ENCODE measurements at regions of chrX and their contacts with region 1.

Region 1: GRCh38 chrX:56248492-56248891 is 16.3 kb downstream of the KLF8 start:
- DNase-seq: peak; percentile 40
- ATAC-seq: peak; percentile 95
- H3K4me3 ChIP-seq: no peak overlapping the region
- H3K27ac ChIP-seq: no peak overlapping the region
- H3K4me1 ChIP-seq: peaks cover 3% of the 10 kb centered on the region; the same call in 1 of the 2 replicates
- H3K27me3 ChIP-seq: no peaks in the 10 kb centered on the region
- CTCF ChIP-seq: peak; percentile 70 to 88 (median 75)
- EP300 ChIP-seq: no peak
- POLR2A ChIP-seq: no peak
- RAD21 ChIP-seq: peak; percentile 95

Region 2: DNA sequence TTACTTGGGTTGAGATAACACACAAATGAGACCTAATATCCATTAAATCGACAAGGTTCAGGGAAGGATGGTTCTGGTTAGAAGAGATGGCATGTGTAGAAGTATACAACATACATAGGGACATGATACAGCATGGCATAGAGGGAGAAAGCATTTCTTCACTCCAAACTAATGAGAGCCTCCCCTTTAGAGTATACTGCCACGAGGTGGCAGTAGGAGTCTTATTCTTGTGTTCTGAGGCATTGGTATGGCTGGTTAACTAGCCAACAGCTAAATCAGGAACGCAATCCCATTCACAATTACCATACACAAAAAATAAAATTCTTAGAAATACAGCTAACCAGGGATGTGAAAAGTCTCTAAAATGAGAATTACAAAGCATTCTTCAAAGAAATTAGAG is 1356.9 kb before region 1 on chrX:
- CTCF ChIA-PET with region 1: interaction called, 3 read pairs
- POLR2A ChIA-PET with region 1: no interaction called
- RAD21 ChIA-PET with region 1: no interaction called
- SMC1A ChIA-PET with region 1: no interaction called
- in situ Hi-C with region 1: no loop called
- intact Hi-C with region 1: loop called (anchors 5 kb)
- DNase-seq: no peak
- ATAC-seq: peak; percentile 72
- H3K4me3 ChIP-seq: no peak overlapping the region
- H3K27ac ChIP-seq: no peak overlapping the region
- H3K4me1 ChIP-seq: no peaks in the 10 kb centered on the region
- H3K27me3 ChIP-seq: no peaks in the 10 kb centered on the region
- CTCF ChIP-seq: peak; percentile 49 to 58 (median 51); a peak in 5 of 6 replicates
- EP300 ChIP-seq: no peak
- POLR2A ChIP-seq: no peak
- RAD21 ChIP-seq: peak; percentile 67

Region 3: DNA sequence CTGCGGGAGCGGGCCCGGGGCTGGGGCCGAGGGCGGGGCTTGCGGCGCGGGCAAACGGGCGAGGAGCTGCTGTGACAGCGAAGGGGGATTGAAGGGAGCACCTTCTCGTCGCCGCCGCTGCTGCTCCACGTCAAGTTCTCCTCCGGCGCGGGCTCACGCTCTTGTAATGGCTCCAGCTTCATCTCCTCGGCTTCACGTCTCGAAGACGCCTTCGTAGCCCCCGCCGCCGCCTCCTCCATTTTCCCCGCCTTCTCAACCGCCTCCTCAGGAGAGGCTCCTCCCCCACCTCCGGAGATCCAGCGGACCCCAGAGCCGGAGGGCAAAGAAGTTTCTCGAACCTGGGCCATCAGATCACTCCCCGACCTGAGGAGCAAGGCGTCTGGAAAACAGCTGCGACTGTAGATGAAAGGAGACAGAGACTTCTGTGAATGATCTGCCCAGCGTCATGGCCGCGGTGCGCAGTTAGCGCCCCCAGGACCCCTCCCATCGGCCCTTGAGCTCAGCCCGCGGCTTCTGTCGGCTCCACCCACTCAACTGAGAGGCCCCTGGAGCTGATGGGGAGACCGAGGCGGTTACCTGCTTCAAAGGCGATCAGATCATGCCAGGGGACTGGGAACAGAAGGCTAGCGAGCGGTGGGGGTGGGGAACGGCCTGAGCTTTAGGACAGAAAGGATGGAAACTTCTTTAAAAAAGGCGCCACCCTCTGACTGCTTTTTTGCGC is 759.7 kb before region 1 on chrX:
- CTCF ChIA-PET with region 1: interaction called, 3 read pairs
- POLR2A ChIA-PET with region 1: no interaction called
- RAD21 ChIA-PET with region 1: interaction called, 3 read pairs
- SMC1A ChIA-PET with region 1: no interaction called
- in situ Hi-C with region 1: loop called (anchors 25 kb)
- intact Hi-C with region 1: no loop called
- DNase-seq: peak; percentile 8
- ATAC-seq: peak; percentile 79
- H3K4me3 ChIP-seq: peak overlapping the region; percentile 72
- H3K27ac ChIP-seq: peak overlapping the region; percentile 57
- H3K4me1 ChIP-seq: no peaks in the 10 kb centered on the region
- H3K27me3 ChIP-seq: no peaks in the 10 kb centered on the region
- CTCF ChIP-seq: peak in 1 of 3 experiments; percentile 13; a peak in 1 of 6 replicates
- EP300 ChIP-seq: 0 out of 4 replicates have a peak, but pooled peaks of 1 of the 2 experiments have one; percentile 14
- POLR2A ChIP-seq: peak; percentile 60; the same call in 1 of the 2 replicates
- RAD21 ChIP-seq: no peak

Region 4: DNA sequence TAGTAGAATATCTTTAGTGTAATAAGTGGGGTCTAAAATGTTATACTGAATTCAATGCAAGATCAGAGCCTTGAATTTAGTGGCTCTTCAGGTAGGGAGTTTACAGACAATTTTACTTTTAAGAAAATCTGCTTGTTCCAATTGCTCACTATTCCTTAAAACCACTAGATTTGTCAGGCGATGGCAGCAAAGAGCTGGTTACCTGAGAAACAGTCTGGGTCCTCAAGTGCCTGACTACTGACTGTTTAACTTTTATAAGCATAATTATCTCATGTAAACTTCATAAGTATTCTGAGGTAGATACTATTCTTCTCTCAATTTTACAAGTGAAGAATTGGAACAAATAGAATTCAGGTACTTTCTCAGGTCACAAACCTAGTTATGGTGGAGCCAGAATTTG is 446.7 kb before region 1 on chrX:
- CTCF ChIA-PET with region 1: interaction called, 11 read pairs
- POLR2A ChIA-PET with region 1: no interaction called
- RAD21 ChIA-PET with region 1: interaction called, 13 read pairs
- SMC1A ChIA-PET with region 1: interaction called, 20 read pairs
- in situ Hi-C with region 1: no loop called
- intact Hi-C with region 1: loop called (anchors 5 kb)
- DNase-seq: no peak
- ATAC-seq: peak; percentile 36; the same call in 1 of the 3 replicates
- H3K4me3 ChIP-seq: no peak overlapping the region
- H3K27ac ChIP-seq: no peak overlapping the region
- H3K4me1 ChIP-seq: no peaks in the 10 kb centered on the region
- H3K27me3 ChIP-seq: no peaks in the 10 kb centered on the region
- CTCF ChIP-seq: peak in 1 of 3 experiments; percentile 32; a peak in 1 of 6 replicates
- EP300 ChIP-seq: no peak
- POLR2A ChIP-seq: no peak
- RAD21 ChIP-seq: peak; percentile 32; the same call in 1 of the 2 replicates

Region 5: DNA sequence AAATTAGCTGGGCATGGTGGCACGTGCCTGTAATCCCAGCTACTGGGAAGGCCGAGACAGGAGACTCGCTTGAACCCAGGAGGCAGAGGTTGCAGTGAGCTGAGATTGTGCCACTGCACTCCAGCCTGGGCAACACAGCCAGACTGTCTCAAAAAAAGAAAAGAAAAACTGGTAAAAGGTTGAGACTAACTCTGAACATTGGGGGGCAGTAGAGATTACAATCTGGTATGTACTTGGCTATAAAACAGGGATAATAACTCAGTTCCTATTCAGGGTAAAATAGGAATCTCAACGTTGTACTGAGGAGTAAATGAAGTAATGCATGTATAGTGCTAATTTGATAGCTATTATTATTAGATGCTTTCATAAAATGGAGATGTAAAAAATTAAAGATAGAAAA is 28.8 kb before region 1 on chrX:
- CTCF ChIA-PET with region 1: interaction called, 11 read pairs
- POLR2A ChIA-PET with region 1: no interaction called
- RAD21 ChIA-PET with region 1: interaction called, 3 read pairs
- SMC1A ChIA-PET with region 1: interaction called, 9 read pairs
- in situ Hi-C with region 1: no loop called
- intact Hi-C with region 1: no loop called
- DNase-seq: no peak
- ATAC-seq: peak; percentile 35; the same call in 1 of the 3 replicates
- H3K4me3 ChIP-seq: no peak overlapping the region
- H3K27ac ChIP-seq: no peak overlapping the region
- H3K4me1 ChIP-seq: no peaks in the 10 kb centered on the region
- H3K27me3 ChIP-seq: no peaks in the 10 kb centered on the region
- CTCF ChIP-seq: peak in 2 of 3 experiments; percentile 6 to 18; a peak in 1 of 6 replicates
- EP300 ChIP-seq: no peak
- POLR2A ChIP-seq: no peak
- RAD21 ChIP-seq: no peak

Region 6: GRCh38 chrX:56729152-56729850 is 480.8 kb after region 1 on chrX and contains the start of gene NBDY:
- CTCF ChIA-PET with region 1: interaction called, 26 read pairs
- POLR2A ChIA-PET with region 1: no interaction called
- RAD21 ChIA-PET with region 1: interaction called, 6 read pairs
- SMC1A ChIA-PET with region 1: interaction called, 11 read pairs
- in situ Hi-C with region 1: no loop called
- intact Hi-C with region 1: loop called (anchors 10 kb)
- DNase-seq: no peak
- ATAC-seq: peak; percentile 86
- H3K4me3 ChIP-seq: peak within 1 kb of the TSS; percentile 84
- H3K27ac ChIP-seq: peak within 1 kb of the TSS; percentile 74
- H3K4me1 ChIP-seq: no peaks in the 10 kb centered on the region
- H3K27me3 ChIP-seq: no peaks in the 10 kb centered on the region
- CTCF ChIP-seq: no peak
- EP300 ChIP-seq: no peak
- POLR2A ChIP-seq: peak; percentile 59
- RAD21 ChIP-seq: no peak
- polyA plus RNA-seq, gene NBDY: 113 to 115 TPM

Measured in GM12878 (cell line).